ENCODE measurements at regions of chr2 and their contacts with region 1.

Region 1: GRCh38 chr2:53422979-53423378 is 344.6 kb upstream of the CHAC2 start:
- DNase-seq: peak; percentile 50
- ATAC-seq: peak; percentile 98
- H3K4me3 ChIP-seq: no peak overlapping the region
- H3K27ac ChIP-seq: no peak overlapping the region
- H3K4me1 ChIP-seq: no peaks in the 10 kb centered on the region
- H3K27me3 ChIP-seq: no peaks in the 10 kb centered on the region; a peak in 1 of 5 replicates
- CTCF ChIP-seq: peak; percentile 79
- EP300 ChIP-seq: no peak
- POLR2A ChIP-seq: no peak
- RAD21 ChIP-seq: peak; percentile 56

Region 2: DNA sequence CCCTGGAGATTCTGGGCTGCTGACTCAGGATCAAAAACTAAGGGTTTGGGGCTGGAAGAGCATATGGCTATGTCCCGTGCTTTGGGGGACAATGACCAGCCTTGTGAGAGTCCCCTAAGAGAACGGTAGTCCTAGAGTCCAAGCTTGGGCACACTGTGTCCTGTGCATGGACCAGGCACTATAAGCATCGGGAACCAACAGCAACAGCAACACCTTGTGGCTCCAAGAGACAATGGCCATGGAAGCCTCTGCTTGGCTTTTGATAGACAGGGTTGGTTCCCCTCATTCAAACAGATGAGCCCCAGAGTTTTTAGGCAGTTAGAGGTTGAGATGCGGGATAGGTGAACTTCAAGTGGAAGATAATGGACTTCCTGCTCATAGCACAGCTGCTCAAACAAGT is 50.3 kb after region 1 on chr2:
- CTCF ChIA-PET with region 1: no interaction called
- POLR2A ChIA-PET with region 1: no interaction called
- in situ Hi-C with region 1: no loop called
- intact Hi-C with region 1: loop called (anchors 1 kb)
- DNase-seq: peak; percentile 13
- ATAC-seq: peak; percentile 94
- H3K4me3 ChIP-seq: no peak overlapping the region
- H3K27ac ChIP-seq: no peak overlapping the region
- H3K4me1 ChIP-seq: no peaks in the 10 kb centered on the region
- H3K27me3 ChIP-seq: no peaks in the 10 kb centered on the region
- CTCF ChIP-seq: peak; percentile 66
- EP300 ChIP-seq: no peak
- POLR2A ChIP-seq: no peak
- RAD21 ChIP-seq: no peak

Region 3: GRCh38 chr2:53715568-53715967 is 292.6 kb after region 1 on chr2:
- CTCF ChIA-PET with region 1: no interaction called
- POLR2A ChIA-PET with region 1: no interaction called
- in situ Hi-C with region 1: no loop called
- intact Hi-C with region 1: loop called (anchors 2 kb)
- DNase-seq: no peak
- ATAC-seq: no peak
- H3K4me3 ChIP-seq: no peak overlapping the region
- H3K27ac ChIP-seq: no peak overlapping the region
- H3K4me1 ChIP-seq: no peaks in the 10 kb centered on the region
- H3K27me3 ChIP-seq: no peaks in the 10 kb centered on the region
- CTCF ChIP-seq: no peak
- EP300 ChIP-seq: no peak
- POLR2A ChIP-seq: no peak
- RAD21 ChIP-seq: no peak

Region 4: GRCh38 chr2:53740170-53740569 is 317.2 kb after region 1 on chr2:
- CTCF ChIA-PET with region 1: interaction called, 11 read pairs
- POLR2A ChIA-PET with region 1: no interaction called
- in situ Hi-C with region 1: loop called (anchors 10 kb)
- intact Hi-C with region 1: loop called (anchors 1 kb)
- DNase-seq: peak; percentile 40
- ATAC-seq: no peak
- H3K4me3 ChIP-seq: no peak overlapping the region
- H3K27ac ChIP-seq: no peak overlapping the region
- H3K4me1 ChIP-seq: peaks cover 8% of the 10 kb centered on the region; the same call in 1 of the 2 replicates
- H3K27me3 ChIP-seq: no peaks in the 10 kb centered on the region
- CTCF ChIP-seq: peak; percentile 46
- EP300 ChIP-seq: no peak
- POLR2A ChIP-seq: no peak
- RAD21 ChIP-seq: no peak

Measured in HepG2 (cell line).